Activated naive CD4-positive, alpha-beta T cell treated with anti-CD3 and anti-CD28 coated beads, Interleukin-2, amount 10 ng/mL, durations not matched to agents 7 days and 5 days (primary cell): ENCODE measurements at regions of chr15 and their contacts with region 1.

Region 1: DNA sequence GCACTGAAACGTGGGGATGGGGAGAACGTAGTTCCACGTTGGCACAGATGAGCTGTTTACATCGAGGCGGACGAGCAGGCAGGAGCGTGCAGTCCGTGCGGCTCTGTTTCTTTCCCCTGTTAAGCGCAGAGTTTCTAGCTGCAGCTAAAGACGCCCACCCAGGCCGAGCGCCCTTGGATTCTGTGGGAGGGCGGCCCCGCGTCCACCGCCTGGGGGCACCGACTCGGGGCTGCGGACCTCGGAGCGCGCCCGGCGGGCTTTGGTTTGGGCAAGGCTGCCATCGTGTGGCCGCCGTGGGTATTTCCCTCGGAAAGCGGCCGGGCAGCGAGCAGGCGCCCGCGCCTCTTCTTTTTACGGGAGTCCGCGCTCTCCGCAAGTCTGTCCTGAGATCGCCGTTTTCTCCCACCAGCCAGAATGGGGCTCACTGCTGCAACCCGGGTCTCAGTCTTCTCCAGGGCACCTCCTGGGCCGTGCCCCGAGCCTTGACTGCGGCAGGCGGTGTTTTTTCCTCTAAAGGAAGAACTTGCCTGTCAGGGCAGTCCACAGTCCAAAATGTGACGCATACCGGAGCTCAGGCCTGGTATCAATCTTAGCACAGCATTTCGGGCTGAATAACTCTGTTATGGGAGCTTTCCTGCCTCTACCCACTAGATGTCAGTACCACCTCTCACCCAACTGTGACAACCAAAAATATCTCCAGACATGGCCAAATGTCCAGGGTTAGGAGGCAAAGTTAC is 219.9 kb upstream of the IGF1R start:
- DNase-seq: peak; percentile 71
- H3K4me3 Mint-ChIP-seq: no peak overlapping the region
- H3K27ac Mint-ChIP-seq: no peak overlapping the region
- H3K4me1 Mint-ChIP-seq: peaks cover 9% of the 10 kb centered on the region
- H3K27me3 Mint-ChIP-seq: peaks cover 75% of the 10 kb centered on the region

Region 2: GRCh38 chr15:98311566-98312188 is 116.7 kb before region 1 on chr15:
- CTCF ChIA-PET with region 1: interaction called, 45 read pairs
- DNase-seq: peak; percentile 84
- H3K4me3 Mint-ChIP-seq: no peak overlapping the region
- H3K27ac Mint-ChIP-seq: no peak overlapping the region
- H3K4me1 Mint-ChIP-seq: no peaks in the 10 kb centered on the region
- H3K27me3 Mint-ChIP-seq: peaks cover 14% of the 10 kb centered on the region

Region 3: DNA sequence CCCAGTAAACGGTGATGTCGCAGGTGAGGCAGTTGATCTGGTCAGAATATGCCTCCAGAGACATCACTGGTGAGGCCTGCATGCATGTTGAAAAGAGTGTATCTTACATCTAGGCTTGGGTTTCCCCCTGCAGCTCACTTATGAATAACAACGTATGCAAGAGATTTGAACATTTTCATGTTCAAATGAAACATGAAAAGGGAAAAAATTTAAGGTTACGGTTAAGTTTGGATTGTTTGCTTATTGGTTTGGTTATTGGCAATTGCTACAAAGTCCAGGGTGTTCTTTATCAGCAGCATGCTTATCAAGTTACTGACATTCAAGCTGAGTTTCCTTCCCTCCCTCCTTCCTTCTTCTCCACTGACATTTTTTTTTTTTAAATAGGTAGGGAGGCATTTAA is 343.1 kb after region 1 on chr15:
- CTCF ChIA-PET with region 1: no interaction called
- DNase-seq: no peak
- H3K4me3 Mint-ChIP-seq: no peak overlapping the region
- H3K27ac Mint-ChIP-seq: no peak overlapping the region
- H3K4me1 Mint-ChIP-seq: peaks cover 7% of the 10 kb centered on the region
- H3K27me3 Mint-ChIP-seq: no peaks in the 10 kb centered on the region